ENCODE measurements at regions of chr1 and their contacts with region 1.

Region 1: DNA sequence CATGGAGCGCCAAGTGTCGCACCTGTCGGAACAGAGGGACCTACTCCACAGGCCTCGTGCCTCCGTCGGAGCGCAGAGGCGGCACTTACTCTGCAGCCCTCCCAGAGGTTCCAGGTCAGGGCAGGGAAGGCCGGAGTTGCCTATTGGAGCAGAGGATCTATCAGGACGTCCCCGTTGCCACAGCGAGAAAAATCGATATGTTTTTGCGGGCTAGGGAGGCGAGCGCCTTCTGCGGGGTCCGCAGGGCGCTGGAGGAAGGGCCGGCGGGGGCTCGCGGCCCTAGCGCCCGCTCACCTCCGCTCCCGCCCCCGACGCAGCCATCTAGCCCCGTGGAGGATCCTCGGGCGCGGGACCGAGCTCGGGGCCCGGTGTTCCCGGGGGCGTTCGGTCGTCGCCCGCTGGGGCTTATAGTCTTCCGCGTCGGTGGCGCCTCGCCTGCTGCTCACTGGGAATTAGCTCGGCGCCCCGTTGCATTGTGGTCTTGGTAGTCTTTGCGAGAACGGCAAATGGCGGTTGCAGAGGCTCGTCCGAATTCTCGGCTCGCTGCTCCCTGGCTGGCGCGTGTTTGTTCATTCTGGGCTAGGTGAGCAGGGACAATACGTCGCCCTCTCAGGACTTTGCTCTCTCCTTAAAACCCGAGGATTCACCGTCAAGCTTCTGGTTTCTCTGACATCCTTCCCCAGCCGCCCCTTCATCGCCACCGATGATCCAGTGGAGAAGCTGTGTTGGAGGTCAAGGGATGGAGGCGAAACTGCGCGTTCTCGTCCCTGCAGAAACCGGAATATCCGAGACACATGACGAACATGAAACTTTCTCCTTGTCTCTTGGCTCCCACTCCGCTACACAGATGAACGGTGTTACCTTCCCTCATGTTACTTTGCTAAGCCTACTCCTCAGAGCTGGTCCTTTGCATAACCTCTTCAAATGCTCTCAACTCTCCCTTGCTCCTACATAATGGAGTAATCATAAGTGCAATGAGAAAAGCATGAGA is at the start of gene JTB:
- DNase-seq: no peak
- H3K4me3 ChIP-seq: peak within 1 kb of the TSS; percentile 94
- H3K27ac ChIP-seq: peak within 1 kb of the TSS; percentile 70
- H3K27me3 ChIP-seq: no peaks in the 10 kb centered on the region
- CTCF ChIP-seq: no peak
- polyA plus RNA-seq, gene JTB: 159 and 160 TPM in 2 replicates

Region 2: GRCh38 chr1:153783233-153784190 is 194.0 kb before region 1 on chr1:
- CTCF ChIA-PET with region 1: no interaction called
- POLR2A ChIA-PET with region 1: no interaction called
- DNase-seq: peak; percentile 73
- H3K4me3 ChIP-seq: peak overlapping the region; percentile 70
- H3K27ac ChIP-seq: peak overlapping the region; percentile 94
- H3K27me3 ChIP-seq: no peaks in the 10 kb centered on the region
- CTCF ChIP-seq: 0 out of 2 replicates have a peak, but pooled peaks have one; percentile 12

Region 3: DNA sequence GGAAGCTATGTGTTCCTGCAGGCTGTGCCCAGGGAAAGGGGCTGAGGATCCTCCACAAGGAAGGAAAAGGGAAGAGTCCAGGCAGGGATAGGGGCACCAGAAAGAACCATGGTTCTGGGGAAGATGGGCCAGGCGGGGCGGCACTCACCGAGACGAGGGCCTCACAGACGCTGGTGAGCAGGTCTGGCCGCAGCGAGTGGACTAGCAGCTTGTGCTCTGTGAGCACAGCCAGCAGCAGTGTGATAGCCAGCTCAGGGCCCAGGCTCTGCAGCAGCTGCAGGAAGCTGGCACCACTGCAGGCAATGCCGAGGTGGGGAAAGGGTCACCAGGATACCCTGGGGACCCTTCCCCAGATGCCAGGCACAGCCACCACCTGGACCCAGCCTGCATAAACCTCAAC is 36.8 kb before region 1 on chr1:
- CTCF ChIA-PET with region 1: interaction called, 11 read pairs
- POLR2A ChIA-PET with region 1: interaction called, 7 read pairs
- DNase-seq: no peak
- H3K4me3 ChIP-seq: no peak overlapping the region
- H3K27ac ChIP-seq: no peak overlapping the region
- H3K27me3 ChIP-seq: no peaks in the 10 kb centered on the region
- CTCF ChIP-seq: no peak

Region 4: GRCh38 chr1:153967082-153968000 is 10.2 kb before region 1 on chr1 and contains the start of gene CREB3L4:
- CTCF ChIA-PET with region 1: interaction called, 31 read pairs
- POLR2A ChIA-PET with region 1: interaction called, 39 read pairs
- DNase-seq: peak; percentile 93
- H3K4me3 ChIP-seq: peak within 1 kb of the TSS; percentile 75
- H3K27ac ChIP-seq: peak within 1 kb of the TSS; percentile 86
- H3K27me3 ChIP-seq: no peaks in the 10 kb centered on the region
- CTCF ChIP-seq: peak; percentile 49
- polyA plus RNA-seq, gene CREB3L4: 7.7 and 10.0 TPM in 2 replicates

Region 5: DNA sequence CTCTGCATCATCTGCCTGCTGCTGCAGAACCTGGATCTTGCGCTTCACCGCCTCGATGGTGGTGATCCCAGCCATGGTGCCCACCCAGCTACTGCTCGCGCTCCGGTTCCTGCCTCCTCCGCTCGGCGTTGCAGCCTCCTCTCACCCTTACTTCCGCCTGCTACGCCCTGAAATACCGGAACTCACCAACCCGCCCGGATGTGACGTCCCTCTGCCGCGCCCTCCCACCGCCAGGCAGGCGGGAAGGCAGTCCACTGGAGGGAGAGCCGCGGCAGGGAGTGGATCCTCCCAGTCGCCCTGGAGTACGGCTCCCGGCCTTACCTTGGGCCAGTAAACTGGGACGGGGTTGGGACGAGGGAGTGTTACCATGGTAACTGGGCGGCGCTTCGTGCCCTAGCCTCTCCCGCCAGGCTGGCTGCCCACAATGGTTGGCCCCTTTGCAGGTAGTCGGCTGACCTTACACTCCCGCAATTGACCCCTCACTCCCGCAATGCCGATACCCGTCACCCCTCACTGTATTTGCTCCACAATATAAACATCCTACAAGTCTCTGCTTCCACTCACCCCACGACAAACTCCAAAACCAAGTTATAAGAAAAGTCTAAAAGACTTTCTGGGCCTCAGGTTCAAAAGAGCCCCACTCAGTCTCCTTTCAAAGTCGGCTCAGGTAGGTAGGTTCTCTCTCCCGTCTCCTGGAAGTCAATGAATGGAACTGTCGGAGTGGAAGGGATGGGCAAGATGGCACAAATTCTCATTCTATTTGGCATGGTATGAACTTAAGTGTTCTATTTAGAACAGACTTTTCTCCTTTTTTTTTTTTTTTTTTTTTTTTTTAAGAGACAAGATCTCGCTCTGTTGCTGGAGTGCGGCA is 205.7 kb after region 1 on chr1:
- CTCF ChIA-PET with region 1: no interaction called
- POLR2A ChIA-PET with region 1: no interaction called
- DNase-seq: peak; percentile 79
- H3K4me3 ChIP-seq: peak overlapping the region; percentile 99
- H3K27ac ChIP-seq: peak overlapping the region; percentile 84
- H3K27me3 ChIP-seq: no peaks in the 10 kb centered on the region
- CTCF ChIP-seq: no peak